GM10248 (cell line): ENCODE measurements at regions of chr2 and their contacts with region 1.

Region 1: DNA sequence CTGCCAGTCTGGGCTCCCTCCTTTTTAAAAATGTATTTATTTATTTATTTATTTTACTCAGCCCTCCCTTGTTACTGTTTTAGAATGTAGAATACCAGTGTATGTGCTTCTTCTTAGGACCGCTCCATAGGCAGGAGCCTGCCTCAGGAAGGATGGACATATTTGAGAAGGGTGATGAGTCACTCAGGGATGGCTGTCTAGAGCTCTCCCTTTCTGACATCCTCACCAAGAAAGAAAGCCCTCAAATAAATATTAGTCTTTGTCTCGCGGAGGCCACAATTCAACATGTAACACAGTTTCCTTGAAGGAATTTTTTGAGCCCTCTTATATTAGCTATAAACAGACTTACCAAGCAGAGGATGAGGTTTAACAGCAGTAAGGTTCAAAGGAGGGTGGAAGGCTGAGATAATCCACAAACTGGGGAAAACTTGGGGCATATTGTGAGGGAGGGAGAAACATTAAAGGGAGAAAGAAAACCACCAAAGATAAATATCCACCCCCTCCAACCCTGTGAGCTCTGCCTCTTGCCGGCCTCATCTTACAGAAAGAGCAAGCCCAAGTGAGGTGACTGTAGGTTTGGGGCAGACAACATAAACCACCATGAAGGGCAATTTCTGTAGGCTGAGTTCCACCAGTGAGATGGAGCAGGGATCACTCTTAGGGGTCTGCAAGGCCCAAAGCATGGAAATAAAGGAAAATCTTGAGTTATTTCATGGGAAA is 163.4 kb downstream of the LRRTM1 start:
- DNase-seq: no peak
- CTCF ChIP-seq: no peak

Region 2: DNA sequence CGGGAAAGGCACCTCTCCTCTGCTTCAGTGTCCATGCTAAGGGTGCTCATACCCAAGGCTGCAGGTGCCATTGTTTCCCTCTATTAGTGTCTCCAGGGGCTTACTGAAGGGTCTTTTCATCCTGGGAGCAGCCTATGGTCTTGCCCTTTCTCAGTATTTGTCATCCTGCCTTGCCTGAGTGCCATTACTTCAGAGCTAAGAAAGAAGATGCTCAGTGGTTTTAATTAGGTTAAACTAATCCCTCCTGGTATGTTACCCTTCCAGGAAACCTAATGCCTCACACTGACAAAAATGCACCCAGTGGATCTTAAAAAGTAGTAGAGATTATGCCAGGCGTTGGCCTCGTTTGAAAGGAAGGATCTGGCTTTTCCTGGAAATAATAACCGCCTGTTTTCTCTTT is 12.0 kb after region 1 on chr2:
- CTCF ChIA-PET with region 1: interaction called, 21 read pairs
- POLR2A ChIA-PET with region 1: no interaction called
- DNase-seq: no peak
- CTCF ChIP-seq: no peak